AG04450 (cell line): ENCODE measurements at regions of chr12 and their contacts with region 1.

Region 1: DNA sequence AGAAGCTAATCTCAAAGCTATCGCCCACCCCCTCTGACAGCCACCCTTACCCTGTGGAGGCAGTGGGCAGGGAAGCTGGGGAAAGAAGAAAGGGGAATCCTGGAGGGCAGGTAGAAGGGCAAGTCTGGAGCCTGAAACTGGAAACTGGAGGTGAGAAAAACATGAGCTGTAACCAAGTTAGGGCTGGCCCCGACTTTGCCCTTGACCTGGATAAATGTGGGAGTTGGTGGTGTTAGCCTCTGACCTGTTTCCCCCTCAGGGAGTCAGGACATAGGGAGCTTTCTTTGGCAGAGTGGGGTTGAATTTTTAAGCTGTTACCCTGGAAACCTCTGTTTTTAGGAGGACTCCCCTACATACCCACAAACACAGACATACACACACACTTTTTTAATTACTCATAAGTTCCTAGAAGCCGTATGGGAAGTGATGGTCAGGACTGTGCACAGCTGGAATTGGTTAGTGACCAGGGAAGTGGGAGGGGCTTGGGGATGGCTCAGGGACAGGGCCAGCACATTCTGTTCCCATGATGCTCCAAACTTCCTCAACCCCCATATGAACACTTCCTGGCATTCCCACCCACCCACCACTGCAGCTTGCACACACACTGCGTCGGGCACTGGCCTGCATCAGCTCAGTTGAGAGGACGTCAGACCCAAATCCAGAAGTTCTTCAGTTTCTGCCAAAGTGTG is 5.0 kb upstream of the MMP19 start:
- DNase-seq: peak; percentile 99
- H3K4me3 ChIP-seq: peak overlapping the region; percentile 39
- H3K27ac ChIP-seq: peak overlapping the region; percentile 98
- H3K27me3 ChIP-seq: no peaks in the 10 kb centered on the region
- CTCF ChIP-seq: no peak

Region 2: GRCh38 chr12:55829967-55830600 is 17.7 kb before region 1 on chr12:
- CTCF ChIA-PET with region 1: interaction called, 3 read pairs
- POLR2A ChIA-PET with region 1: interaction called, 25 read pairs
- DNase-seq: no peak
- H3K4me3 ChIP-seq: peak overlapping the region; percentile 91
- H3K27ac ChIP-seq: peak overlapping the region; percentile 81
- H3K27me3 ChIP-seq: no peaks in the 10 kb centered on the region
- CTCF ChIP-seq: no peak

Region 3: DNA sequence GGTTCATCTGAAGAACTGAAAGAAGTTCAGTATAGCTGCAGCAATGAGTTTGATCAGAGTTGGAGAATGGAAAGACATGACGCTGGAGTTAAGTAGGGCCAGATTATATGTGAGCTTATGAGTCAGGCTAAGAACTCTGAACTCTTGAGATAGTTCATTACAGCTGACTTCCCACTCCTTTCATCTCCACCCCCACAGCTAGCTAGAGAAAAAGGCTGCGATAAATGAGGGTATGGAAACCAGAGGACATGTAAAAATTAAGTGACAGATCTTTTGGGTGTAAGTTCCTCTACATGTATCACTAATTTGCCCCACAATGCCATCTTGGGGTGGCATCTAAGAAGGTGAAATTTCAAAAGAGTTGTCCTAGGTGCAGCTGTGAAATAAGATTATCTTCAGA is 51.3 kb after region 1 on chr12:
- CTCF ChIA-PET with region 1: no interaction called
- POLR2A ChIA-PET with region 1: no interaction called
- DNase-seq: no peak
- H3K4me3 ChIP-seq: no peak overlapping the region
- H3K27ac ChIP-seq: no peak overlapping the region
- H3K27me3 ChIP-seq: no peaks in the 10 kb centered on the region
- CTCF ChIP-seq: no peak